HEK293 (cell line): ENCODE measurements at regions of chr17 and their contacts with region 1.

Region 1: GRCh38 chr17:14300575-14301278 is at the start of gene HS3ST3B1:
- H3K4me3 ChIP-seq: peak within 1 kb of the TSS; percentile 54
- H3K27ac ChIP-seq: peak within 1 kb of the TSS; percentile 94
- H3K4me1 ChIP-seq: peaks cover 7% of the 10 kb centered on the region
- CTCF ChIP-seq: no peak

Region 2: GRCh38 chr17:13017659-13018459 is 1282.9 kb before region 1 on chr17 and contains the start of gene ELAC2:
- CTCF ChIA-PET with region 1: no interaction called
- POLR2A ChIA-PET with region 1: interaction called, 12 read pairs
- H3K4me3 ChIP-seq: peak within 1 kb of the TSS; percentile 81
- H3K27ac ChIP-seq: peak within 1 kb of the TSS; percentile 78
- H3K4me1 ChIP-seq: peaks cover 6% of the 10 kb centered on the region; the same call in 1 of the 2 replicates
- CTCF ChIP-seq: peak; percentile 82

Region 3: GRCh38 chr17:13594762-13595598 is 705.7 kb before region 1 on chr17:
- CTCF ChIA-PET with region 1: interaction called, 21 read pairs
- POLR2A ChIA-PET with region 1: interaction called, 7 read pairs
- H3K4me3 ChIP-seq: no peak overlapping the region
- H3K27ac ChIP-seq: no peak overlapping the region
- H3K4me1 ChIP-seq: peaks cover 29% of the 10 kb centered on the region
- CTCF ChIP-seq: 0 out of 2 replicates have a peak, but pooled peaks have one; percentile 28

Region 4: DNA sequence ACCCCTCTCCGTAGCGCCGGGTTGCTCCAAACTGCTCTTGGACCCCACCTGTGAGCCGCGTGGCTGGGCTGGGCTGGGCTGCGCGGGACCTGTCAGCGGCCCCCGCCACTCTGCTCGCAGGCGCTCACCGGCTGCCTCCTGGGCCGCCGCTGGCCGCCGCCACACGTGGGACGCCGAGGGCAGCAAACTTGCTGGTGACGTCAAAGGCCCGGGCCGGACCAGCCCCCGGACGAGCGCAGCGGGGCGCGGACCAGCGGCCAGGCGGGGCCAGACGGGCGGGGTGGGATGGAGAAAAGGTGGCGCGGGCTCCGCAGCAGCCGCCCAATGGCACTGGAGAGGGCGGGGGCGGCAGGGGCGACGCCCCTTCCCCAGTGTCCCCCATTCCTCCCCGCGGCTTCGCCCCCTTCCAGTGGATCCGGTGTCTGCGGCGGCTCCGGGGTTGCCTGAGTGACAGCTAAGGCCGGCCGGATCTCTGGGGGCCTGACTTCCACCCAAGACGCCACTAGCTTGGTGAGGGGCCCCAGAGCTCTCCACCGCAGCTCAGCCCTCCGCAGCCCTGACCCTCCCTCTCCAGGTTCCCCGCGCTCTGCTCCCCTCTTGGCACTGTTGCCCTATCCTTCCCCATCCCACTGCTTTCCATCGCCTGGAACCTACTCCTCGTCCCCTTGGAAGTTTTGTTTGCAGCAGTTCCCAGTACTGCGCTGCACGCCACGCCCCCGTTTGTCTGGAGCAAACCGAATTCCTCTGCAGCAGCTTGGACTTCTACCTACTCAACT is 698.8 kb before region 1 on chr17 and contains the start of gene HS3ST3A1:
- CTCF ChIA-PET with region 1: interaction called, 17 read pairs
- POLR2A ChIA-PET with region 1: interaction called, 25 read pairs
- H3K4me3 ChIP-seq: peak within 1 kb of the TSS; percentile 60
- H3K27ac ChIP-seq: peak within 1 kb of the TSS; percentile 96
- H3K4me1 ChIP-seq: peaks cover 8% of the 10 kb centered on the region
- CTCF ChIP-seq: no peak

Region 5: DNA sequence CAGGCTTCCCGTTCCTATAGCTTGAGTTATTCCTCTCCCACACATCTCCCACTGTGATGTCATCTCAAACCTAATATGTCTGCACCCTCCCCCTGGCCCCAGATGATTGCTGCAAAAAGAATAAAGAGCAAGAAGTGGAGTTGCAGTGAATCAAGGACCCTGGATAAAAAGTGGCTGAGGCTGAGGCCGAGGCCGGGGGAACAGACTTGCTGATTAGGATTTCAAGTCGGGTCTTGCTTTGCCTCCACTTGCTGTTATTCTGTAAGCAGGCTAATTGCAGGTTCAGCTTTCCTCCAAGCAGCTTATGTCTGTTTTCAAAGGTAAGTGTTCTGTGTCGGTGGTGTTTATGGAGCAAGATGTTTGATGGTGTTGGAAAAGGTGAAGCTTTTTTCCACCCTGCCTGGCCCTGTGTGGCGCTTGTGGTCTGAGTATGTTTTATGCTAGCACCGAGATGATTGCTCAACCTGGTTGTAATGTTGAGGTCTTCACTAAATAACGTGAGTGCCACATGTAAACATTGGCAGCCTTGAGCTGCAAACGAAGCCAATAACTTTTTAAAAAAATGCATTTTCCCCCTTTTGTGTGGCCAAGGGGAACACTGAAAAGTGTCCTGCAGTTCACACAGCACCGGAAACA is 15.5 kb after region 1 on chr17:
- CTCF ChIA-PET with region 1: interaction called, 4 read pairs
- POLR2A ChIA-PET with region 1: interaction called, 16 read pairs
- H3K4me3 ChIP-seq: no peak overlapping the region
- H3K27ac ChIP-seq: peak overlapping the region; percentile 10; the same call in 1 of the 2 replicates
- H3K4me1 ChIP-seq: peaks cover 20% of the 10 kb centered on the region
- CTCF ChIP-seq: no peak

Region 6: GRCh38 chr17:14321476-14321949 is 20.8 kb after region 1 on chr17:
- CTCF ChIA-PET with region 1: interaction called, 4 read pairs
- POLR2A ChIA-PET with region 1: interaction called, 16 read pairs
- H3K4me3 ChIP-seq: no peak overlapping the region
- H3K27ac ChIP-seq: peak overlapping the region; percentile 66
- H3K4me1 ChIP-seq: peaks cover 39% of the 10 kb centered on the region
- CTCF ChIP-seq: no peak

Region 7: GRCh38 chr17:14396547-14396946 is 95.8 kb after region 1 on chr17:
- CTCF ChIA-PET with region 1: no interaction called
- POLR2A ChIA-PET with region 1: no interaction called
- H3K4me3 ChIP-seq: no peak overlapping the region
- H3K27ac ChIP-seq: no peak overlapping the region
- H3K4me1 ChIP-seq: peaks cover 5% of the 10 kb centered on the region; the same call in 1 of the 2 replicates
- CTCF ChIP-seq: no peak

Region 8: GRCh38 chr17:14622615-14623101 is 321.9 kb after region 1 on chr17:
- CTCF ChIA-PET with region 1: no interaction called
- POLR2A ChIA-PET with region 1: interaction called, 14 read pairs
- H3K4me3 ChIP-seq: no peak overlapping the region
- H3K27ac ChIP-seq: peak overlapping the region; percentile 84
- H3K4me1 ChIP-seq: peaks cover 19% of the 10 kb centered on the region
- CTCF ChIP-seq: no peak